Esophagus squamous epithelium (tissue), 5 donors: ENCODE measurements at regions of chr6 and their contacts with region 1.

Region 1: DNA sequence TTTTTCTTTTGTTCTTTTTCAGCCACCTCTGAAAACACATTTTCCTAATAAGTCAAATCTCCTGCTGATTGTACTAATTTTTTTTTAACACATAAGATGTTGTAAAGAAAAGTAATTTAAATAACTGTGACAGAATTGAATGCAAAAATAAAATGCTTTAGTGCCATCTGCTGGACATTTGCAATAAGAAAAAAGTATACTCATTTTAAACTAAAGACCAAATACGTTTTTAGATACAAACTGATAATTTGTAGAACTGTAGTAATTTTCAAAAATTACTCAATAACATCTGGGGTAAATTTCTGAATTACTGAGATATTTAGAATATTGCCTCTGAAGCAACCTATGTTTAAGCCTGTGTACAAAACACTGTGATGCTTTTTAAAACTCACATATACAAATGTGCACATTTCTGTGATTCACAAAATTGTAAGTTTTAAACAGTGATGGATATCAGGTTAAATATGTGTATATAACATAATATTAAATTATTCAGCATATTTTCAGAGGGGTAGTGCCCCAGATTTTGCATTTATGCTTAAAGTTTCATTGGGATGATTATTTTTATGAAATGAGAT is 198.7 kb downstream of the RIMS1 start:
- DNase-seq: no peak
- H3K4me3 ChIP-seq: no peak overlapping the region
- H3K27ac ChIP-seq: no peak overlapping the region
- H3K4me1 ChIP-seq: no peaks in the 10 kb centered on the region
- H3K27me3 ChIP-seq: no peaks in the 10 kb centered on the region
- CTCF ChIP-seq: peak in 4 of 6 experiments; percentile 21 to 44 (median 30)
- POLR2A ChIP-seq: no peak

Region 2: DNA sequence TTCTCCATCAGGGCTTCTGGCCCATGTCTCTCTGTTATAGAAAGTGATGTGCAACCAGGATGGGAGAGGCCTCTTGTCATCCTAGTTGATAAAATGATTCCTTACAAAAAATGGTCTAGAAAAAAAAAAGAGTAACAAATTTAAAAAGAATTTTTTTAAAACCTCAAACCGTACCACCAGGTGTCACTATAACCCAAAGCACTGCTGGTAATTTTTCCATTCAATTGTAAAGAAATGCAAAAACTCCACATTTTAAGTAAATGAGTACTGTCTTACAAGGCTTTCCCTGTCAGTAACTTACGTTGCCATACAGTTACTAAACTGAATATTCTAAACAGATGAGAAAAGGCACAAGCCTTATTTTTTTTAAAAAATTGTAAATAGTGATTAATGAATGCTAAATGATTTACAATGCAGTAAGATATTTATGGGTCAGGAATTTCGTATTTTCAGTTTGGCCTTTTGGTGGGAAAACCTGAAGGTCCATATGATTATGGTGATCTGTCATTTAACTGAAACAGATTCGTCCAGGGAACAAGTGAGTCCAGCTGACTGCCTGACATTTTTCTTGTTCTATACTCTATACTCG is 701.1 kb before region 1 on chr6:
- intact Hi-C with region 1: loop called (anchors 10 kb)
- DNase-seq: no peak
- H3K4me3 ChIP-seq: no peak overlapping the region
- H3K27ac ChIP-seq: no peak overlapping the region
- H3K4me1 ChIP-seq: peaks cover 0 to 22% (median 0%) of the 10 kb centered on the region in 3 donors
- H3K27me3 ChIP-seq: no peaks in the 10 kb centered on the region
- CTCF ChIP-seq: peak in 5 of 6 experiments; percentile 35 to 64 (median 53)
- POLR2A ChIP-seq: no peak

Region 3: GRCh38 chr6:71533939-71534379 is 551.1 kb before region 1 on chr6:
- intact Hi-C with region 1: loop called (anchors 10 kb)
- DNase-seq: no peak
- H3K4me3 ChIP-seq: no peak overlapping the region
- H3K27ac ChIP-seq: no peak overlapping the region
- H3K4me1 ChIP-seq: no peaks in the 10 kb centered on the region
- H3K27me3 ChIP-seq: no peaks in the 10 kb centered on the region
- CTCF ChIP-seq: peak in 5 of 6 experiments; percentile 26 to 62 (median 40)
- POLR2A ChIP-seq: no peak

Region 4: DNA sequence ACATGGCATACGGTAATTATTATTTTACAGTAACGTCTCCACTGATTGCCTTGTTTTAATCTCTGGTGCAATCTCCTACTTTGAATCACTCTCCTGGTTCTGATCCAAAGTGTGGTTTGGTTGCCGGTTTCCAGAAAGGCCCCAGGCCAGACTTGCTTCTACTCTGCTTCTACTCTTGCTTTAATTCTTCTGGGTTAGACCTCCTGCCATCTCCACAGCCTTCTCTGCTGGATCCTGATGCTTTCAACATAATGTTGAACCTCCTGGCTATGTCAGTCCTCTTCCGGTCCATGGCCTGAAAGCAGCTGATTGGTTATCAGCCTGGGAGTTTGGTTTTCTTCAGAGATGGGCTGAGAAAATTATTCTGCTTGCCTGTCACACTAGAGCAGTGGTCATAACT is 465.2 kb before region 1 on chr6:
- intact Hi-C with region 1: no loop called
- DNase-seq: no peak
- H3K4me3 ChIP-seq: no peak overlapping the region
- H3K27ac ChIP-seq: no peak overlapping the region
- H3K4me1 ChIP-seq: no peaks in the 10 kb centered on the region
- H3K27me3 ChIP-seq: no peaks in the 10 kb centered on the region
- CTCF ChIP-seq: no peak
- POLR2A ChIP-seq: no peak